Activated CD8-positive, alpha-beta T cell treated with anti-CD3 and anti-CD28 coated beads for 36 hours (primary cell): ENCODE measurements at regions of chr10 and their contacts with region 1.

Region 1: GRCh38 chr10:70602665-70603448 is at the start of gene PRF1:
- DNase-seq: peak; percentile 98
- ATAC-seq: peak; percentile 89
- H3K4me3 Mint-ChIP-seq: peak within 1 kb of the TSS; percentile 98
- H3K27ac Mint-ChIP-seq: peak within 1 kb of the TSS; percentile 97
- H3K4me1 Mint-ChIP-seq: peaks cover 60% of the 10 kb centered on the region
- H3K27me3 Mint-ChIP-seq: no peaks in the 10 kb centered on the region
- CTCF ChIP-seq: no peak
- total RNA-seq, gene PRF1: 107 to 113 TPM

Region 2: GRCh38 chr10:70508912-70509756 is 93.7 kb before region 1 on chr10:
- CTCF ChIA-PET with region 1: no interaction called
- POLR2A ChIA-PET with region 1: no interaction called
- intact Hi-C with region 1: no loop called
- DNase-seq: no peak
- ATAC-seq: no peak
- H3K4me3 Mint-ChIP-seq: no peak overlapping the region
- H3K27ac Mint-ChIP-seq: no peak overlapping the region
- H3K4me1 Mint-ChIP-seq: peaks cover 4% of the 10 kb centered on the region
- H3K27me3 Mint-ChIP-seq: no peaks in the 10 kb centered on the region
- CTCF ChIP-seq: no peak

Region 3: GRCh38 chr10:70584909-70585544 is 17.8 kb before region 1 on chr10:
- CTCF ChIA-PET with region 1: interaction called, 3 read pairs
- POLR2A ChIA-PET with region 1: interaction called, 16 read pairs
- intact Hi-C with region 1: no loop called
- DNase-seq: peak; percentile 28
- ATAC-seq: peak; percentile 52
- H3K4me3 Mint-ChIP-seq: no peak overlapping the region
- H3K27ac Mint-ChIP-seq: peak overlapping the region; percentile 46
- H3K4me1 Mint-ChIP-seq: peaks cover 52% of the 10 kb centered on the region
- H3K27me3 Mint-ChIP-seq: no peaks in the 10 kb centered on the region
- CTCF ChIP-seq: no peak

Region 4: GRCh38 chr10:70880077-70880534 is 277.2 kb after region 1 on chr10:
- CTCF ChIA-PET with region 1: no interaction called
- POLR2A ChIA-PET with region 1: no interaction called
- intact Hi-C with region 1: no loop called
- DNase-seq: peak; percentile 88
- ATAC-seq: peak; percentile 97
- H3K4me3 Mint-ChIP-seq: no peak overlapping the region
- H3K27ac Mint-ChIP-seq: no peak overlapping the region
- H3K4me1 Mint-ChIP-seq: peaks cover 5% of the 10 kb centered on the region
- H3K27me3 Mint-ChIP-seq: no peaks in the 10 kb centered on the region
- CTCF ChIP-seq: peak; percentile 87